Left ventricle myocardium superior (tissue), 1 donor: ENCODE measurements at regions of chr6 and their contacts with region 1.

Region 1: DNA sequence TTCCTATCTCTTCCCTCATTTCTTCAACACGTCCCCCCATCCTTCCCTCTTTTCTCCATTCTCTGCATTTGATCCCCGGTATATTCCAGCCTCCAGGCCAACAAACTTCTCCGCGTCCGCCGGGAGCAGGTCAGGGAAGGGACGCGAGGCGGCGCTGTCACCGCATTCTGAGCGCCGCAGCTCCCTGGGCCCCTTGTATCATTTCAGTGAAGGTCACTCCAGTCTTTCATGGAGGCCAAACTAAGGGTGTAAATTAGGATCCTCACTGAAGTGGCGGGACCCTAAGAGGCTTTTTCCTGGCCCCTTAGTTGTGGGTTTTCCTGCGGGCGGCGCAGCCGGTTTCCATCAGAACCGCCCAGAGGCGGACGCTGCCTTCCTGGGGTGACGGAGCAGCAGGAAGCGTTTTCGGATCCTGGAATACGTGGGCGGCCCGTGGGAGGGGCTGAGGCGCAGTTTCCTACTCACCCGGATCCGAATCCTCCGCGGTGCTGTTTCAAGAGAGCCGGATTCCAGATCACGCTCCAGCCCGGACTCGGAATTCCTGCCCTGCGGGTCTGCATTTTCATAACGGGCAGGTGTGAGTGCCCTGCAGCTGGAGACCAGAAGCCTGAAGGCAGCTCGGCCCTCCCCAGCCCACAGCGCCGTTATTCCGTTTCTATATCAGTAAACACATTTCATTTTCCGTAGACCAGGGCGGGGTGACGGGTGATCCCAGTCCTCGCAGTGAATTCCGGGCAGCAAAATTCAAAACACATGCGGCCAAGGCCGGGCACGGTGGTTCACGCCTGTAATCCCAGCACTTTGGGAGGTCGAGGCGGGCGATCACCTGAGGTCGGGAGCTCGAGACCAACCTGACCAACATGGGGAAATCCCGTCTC is 3.6 kb upstream of the MICA start:
- DNase-seq: peak; percentile 95
- ATAC-seq: peak; percentile 85

Region 2: GRCh38 chr6:30845183-30845582 is 554.6 kb before region 1 on chr6:
- intact Hi-C with region 1: no loop called
- DNase-seq: no peak
- ATAC-seq: no peak

Region 3: DNA sequence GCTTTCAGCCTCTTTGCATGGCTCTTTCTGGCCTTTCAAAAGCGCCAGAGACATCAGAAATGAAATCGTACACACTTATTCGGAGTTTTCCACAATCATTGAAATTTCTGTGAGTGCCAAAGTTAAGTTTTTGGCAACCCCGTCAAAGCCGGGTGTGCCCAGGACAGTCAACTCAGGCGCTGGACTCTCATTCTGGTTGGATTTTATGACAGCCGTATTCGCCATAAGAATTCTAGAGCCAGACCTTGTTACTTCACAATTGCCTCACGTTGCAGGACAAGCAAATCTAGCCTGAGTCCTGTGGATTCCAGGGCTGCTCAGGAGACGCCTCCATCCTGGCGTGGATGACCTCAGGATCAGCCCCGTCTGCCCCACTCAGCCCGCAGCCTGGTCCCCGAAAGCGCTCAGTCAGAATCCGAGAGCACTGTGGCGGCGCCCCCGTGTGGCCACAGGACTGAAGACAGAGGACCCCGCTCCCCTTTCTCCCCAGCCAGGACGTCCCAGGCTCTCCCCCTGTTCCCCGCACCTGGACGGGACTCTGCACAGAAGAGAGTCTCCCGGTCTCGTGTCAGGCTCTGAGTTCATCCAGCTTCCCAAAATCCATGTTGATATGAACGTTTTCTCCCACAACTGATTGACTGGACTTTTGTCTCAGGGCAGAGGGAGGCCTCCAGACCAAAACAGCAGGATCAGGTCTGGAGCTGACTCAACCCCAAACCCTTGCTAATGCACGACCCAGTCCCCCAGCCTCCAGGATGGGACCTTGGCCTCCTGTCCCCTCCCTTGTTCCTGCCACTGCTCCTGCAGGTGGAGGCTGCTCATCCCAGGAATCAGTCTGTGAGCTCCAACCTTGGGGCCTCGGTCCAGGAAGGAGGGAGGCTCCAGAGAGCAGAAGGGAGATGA is 41.8 kb after region 1 on chr6:
- intact Hi-C with region 1: loop called (anchors 5 kb)
- DNase-seq: peak; percentile 93
- ATAC-seq: peak; percentile 99